ENCODE measurements at regions of chr6 and their contacts with region 1.

Region 1: DNA sequence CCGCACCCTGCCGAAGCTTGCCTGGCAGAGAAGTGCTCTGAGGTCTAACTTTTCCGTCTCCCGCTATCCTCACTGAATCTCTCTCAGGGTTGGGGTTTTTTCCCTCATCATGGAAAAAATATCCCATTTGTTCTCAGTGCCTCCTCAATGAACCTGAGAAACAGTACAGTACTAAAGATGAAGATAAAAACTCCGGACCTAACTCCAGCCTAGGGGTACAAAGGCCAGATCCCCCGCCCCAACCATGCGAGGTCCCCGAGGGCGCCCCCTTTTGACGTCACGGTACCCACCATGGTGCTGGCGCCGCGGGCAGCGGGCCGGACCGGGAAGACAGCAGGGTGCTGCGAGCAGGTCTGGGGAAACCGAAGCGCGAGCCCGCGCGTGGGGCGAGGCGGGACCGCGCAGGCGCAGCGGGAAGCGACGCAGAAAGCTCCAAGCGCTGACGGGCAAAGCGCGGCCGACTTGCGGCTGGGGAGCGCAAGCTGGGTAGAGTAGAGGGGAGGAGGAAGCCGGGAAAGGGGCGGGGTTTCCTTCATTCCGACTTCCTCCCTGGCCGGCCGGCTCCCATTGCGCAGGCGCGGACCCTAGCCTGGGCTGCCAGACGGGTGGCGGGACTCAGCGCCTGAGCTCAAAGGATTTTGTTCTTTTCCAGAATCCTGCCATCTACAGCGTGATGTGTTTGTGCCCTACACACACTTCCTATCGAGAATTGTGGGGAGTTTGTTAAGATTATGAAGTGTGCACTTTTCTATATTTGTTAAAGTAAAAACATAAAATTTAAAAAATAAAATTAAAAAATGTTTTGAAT is at the start of gene LSM2:
- DNase-seq: peak; percentile 96 to 98 (median 98)
- ATAC-seq: peak; percentile 100
- H3K4me3 ChIP-seq: peak within 1 kb of the TSS; percentile 92
- H3K4me3 Mint-ChIP-seq: peak within 1 kb of the TSS; percentile 86 to 95 (median 92)
- H3K27ac ChIP-seq: peak within 1 kb of the TSS; percentile 89
- H3K27ac Mint-ChIP-seq: peak within 1 kb of the TSS; percentile 88 to 97 (median 93)
- H3K4me1 ChIP-seq: peaks cover 9 to 14% of the 10 kb centered on the region in 2 donors
- H3K4me1 Mint-ChIP-seq: peaks cover 16 to 47% (median 30%) of the 10 kb centered on the region in 7 donors
- H3K27me3 ChIP-seq: no peaks in the 10 kb centered on the region
- H3K27me3 Mint-ChIP-seq: no peaks in the 10 kb centered on the region
- total RNA-seq, gene LSM2: 22.9 to 94.5 (median 29.2) TPM

Region 2: DNA sequence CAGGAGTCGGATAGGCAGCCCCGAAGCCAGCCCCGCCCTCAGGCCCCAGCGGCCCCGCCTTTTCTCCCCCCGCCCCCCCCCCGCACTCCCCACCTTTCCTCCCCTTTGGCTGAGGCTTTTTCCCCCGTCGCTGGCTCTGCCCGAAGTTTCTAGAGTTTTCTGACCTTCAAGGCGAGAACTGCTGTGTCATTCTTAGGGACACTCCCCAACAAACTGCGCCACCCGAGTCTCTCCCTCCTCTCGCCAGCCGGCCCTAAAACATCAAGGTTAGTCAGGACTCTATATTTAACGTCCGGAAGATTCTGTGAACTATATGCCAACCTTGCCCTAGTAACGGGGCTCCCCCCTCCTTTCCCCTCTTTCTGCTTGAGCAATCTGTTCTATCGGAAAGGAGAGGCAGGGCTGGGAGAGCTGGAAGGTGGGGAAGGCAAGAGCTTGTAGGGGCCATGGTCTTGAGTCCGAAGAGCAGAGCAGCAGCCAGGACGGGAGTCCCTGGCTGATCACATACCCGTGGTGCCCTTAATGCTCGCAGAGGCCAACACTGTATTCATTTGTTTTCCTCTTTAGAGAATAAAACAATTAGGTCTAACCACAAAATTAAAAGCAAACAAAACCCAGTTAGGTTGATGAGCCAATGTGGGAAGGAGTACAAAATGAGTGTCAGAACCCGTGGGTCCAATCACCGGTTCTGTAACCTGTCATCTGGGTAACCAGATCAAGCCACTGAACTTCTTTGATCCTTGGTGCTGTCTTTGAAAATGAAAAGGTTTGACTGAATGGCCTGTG is 15.6 kb after region 1 on chr6:
- CTCF ChIA-PET with region 1: interaction called, 9 read pairs
- POLR2A ChIA-PET with region 1: interaction called, 29 read pairs
- intact Hi-C with region 1: no loop called
- DNase-seq: peak in 8 of 9 donors; percentile 46 to 72 (median 58)
- ATAC-seq: peak; percentile 57
- H3K4me3 ChIP-seq: peak overlapping the region; percentile 92
- H3K4me3 Mint-ChIP-seq: peak overlapping the region; percentile 92 to 98 (median 94)
- H3K27ac ChIP-seq: peak overlapping the region; percentile 81
- H3K27ac Mint-ChIP-seq: peak overlapping the region; percentile 87 to 98 (median 94)
- H3K4me1 ChIP-seq: peaks cover 24 to 27% of the 10 kb centered on the region in 2 donors
- H3K4me1 Mint-ChIP-seq: peaks cover 9 to 72% (median 62%) of the 10 kb centered on the region in 7 donors
- H3K27me3 ChIP-seq: no peaks in the 10 kb centered on the region
- H3K27me3 Mint-ChIP-seq: no peaks in the 10 kb centered on the region

Region 3: DNA sequence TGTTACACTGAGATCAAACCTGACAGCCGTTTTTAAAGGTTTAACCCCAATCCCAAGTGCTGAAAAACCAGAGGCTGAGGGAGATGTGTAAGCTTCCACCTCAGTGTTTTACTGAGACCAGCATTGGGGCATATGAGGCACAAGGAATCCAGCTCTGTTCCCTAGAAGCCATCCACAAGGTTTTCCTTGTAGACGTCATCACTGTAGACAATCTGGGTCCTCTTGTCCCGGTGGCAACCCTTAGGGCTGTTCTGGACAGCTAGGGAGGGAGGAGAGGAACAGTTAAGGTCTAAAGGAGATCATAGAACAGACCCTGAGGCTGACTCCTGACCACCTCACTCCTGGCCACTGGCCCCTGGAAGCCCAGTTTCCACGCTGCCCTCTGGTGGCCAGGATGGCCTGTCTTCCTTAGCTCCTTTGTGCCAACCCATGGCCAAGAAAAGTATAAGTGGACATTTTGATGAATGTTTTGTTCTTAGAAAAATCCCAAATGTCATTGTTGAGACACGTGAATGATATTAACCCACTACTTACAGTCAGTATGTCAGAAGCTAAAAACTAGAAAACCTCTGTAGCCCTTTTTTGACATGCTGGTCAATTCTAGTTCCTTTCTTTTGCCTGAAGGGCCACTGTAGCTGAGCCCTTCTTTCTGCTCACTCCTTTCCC is 145.6 kb after region 1 on chr6:
- CTCF ChIA-PET with region 1: no interaction called
- POLR2A ChIA-PET with region 1: no interaction called
- intact Hi-C with region 1: no loop called
- DNase-seq: peak in 1 of 9 donors; percentile 53
- ATAC-seq: peak; percentile 67
- H3K4me3 ChIP-seq: no peak overlapping the region
- H3K4me3 Mint-ChIP-seq: no peak overlapping the region
- H3K27ac ChIP-seq: no peak overlapping the region
- H3K27ac Mint-ChIP-seq: peak overlapping the region in 3 of 9 donors; percentile 51 to 61 (median 52)
- H3K4me1 ChIP-seq: no peaks in the 10 kb centered on the region
- H3K4me1 Mint-ChIP-seq: peaks cover 2 to 7% (median 4%) of the 10 kb centered on the region in 7 donors
- H3K27me3 ChIP-seq: no peaks in the 10 kb centered on the region
- H3K27me3 Mint-ChIP-seq: no peaks in the 10 kb centered on the region

Measured in naive thymus-derived CD4-positive, alpha-beta T cell (primary cell).